CD4-positive, alpha-beta T cell (primary cell): ENCODE measurements at regions of chr18 and their contacts with region 1.

Region 1: GRCh38 chr18:46574000-46574742 is 82.8 kb downstream of the LOXHD1 start:
- DNase-seq: no peak
- ATAC-seq: no peak
- H3K4me3 ChIP-seq: no peak overlapping the region
- H3K4me3 Mint-ChIP-seq: no peak overlapping the region
- H3K27ac ChIP-seq: no peak overlapping the region
- H3K27ac Mint-ChIP-seq: no peak overlapping the region
- H3K4me1 ChIP-seq: no peaks in the 10 kb centered on the region
- H3K4me1 Mint-ChIP-seq: no peaks in the 10 kb centered on the region
- H3K27me3 ChIP-seq: peaks cover 0 to 3% of the 10 kb centered on the region in 2 experiments
- H3K27me3 Mint-ChIP-seq: peaks cover 12% of the 10 kb centered on the region
- CTCF ChIP-seq: no peak

Region 2: DNA sequence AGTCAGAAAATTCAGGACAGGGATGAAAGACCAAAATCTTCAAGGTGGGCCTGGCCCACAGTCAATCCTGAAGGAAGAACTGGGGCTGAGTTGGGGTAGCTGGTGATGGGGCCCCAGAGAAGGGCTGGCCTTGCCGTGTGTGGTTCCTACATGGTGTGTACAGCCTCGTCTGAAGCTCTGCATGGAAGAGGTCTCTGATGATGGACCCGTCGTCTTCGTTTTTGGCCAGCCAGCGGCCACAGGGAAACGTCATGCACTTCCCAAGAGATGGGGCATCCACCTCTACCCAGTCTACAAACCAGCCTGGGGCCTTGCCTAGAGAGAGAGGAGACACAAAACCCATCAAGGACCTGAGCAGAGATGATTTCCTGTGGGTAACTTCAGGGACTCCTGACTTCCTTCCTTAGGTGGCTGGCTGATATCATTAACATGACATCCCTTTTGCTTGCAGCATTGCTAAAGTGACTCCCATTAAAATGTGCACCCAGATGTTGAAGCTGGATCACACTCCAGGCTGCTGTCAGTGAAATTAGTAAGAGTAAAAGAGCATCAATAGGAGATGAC is 32.5 kb before region 1 on chr18:
- CTCF ChIA-PET with region 1: no interaction called
- POLR2A ChIA-PET with region 1: no interaction called
- intact Hi-C with region 1: loop called in 1 of 2 experiments (anchors 2 kb)
- DNase-seq: no peak
- ATAC-seq: no peak
- H3K4me3 ChIP-seq: no peak overlapping the region
- H3K4me3 Mint-ChIP-seq: no peak overlapping the region
- H3K27ac ChIP-seq: no peak overlapping the region
- H3K27ac Mint-ChIP-seq: no peak overlapping the region
- H3K4me1 ChIP-seq: no peaks in the 10 kb centered on the region
- H3K4me1 Mint-ChIP-seq: no peaks in the 10 kb centered on the region
- H3K27me3 ChIP-seq: no peaks in the 10 kb centered on the region
- H3K27me3 Mint-ChIP-seq: peaks cover 17% of the 10 kb centered on the region
- CTCF ChIP-seq: no peak

Region 3: DNA sequence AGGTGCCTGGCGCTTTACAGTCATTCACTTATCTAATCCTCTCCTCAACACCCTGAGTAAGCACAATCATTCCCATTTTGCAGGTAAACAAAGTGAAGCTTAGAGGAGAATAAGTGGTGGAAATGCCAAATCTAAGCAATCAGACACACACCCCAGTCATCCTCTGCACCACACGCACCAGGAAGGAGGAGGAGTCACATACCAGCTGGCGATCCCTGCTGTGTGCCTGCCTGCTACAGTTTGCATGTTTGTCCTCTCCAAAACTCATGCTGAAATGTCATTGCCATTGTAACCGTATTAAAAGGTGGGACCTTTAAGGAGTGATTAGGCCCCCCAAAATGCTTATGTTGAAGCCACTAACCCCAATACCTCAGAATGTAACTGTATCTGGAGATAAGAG is 10.9 kb before region 1 on chr18:
- CTCF ChIA-PET with region 1: no interaction called
- POLR2A ChIA-PET with region 1: no interaction called
- intact Hi-C with region 1: no loop called
- DNase-seq: no peak
- ATAC-seq: no peak
- H3K4me3 ChIP-seq: no peak overlapping the region
- H3K4me3 Mint-ChIP-seq: no peak overlapping the region
- H3K27ac ChIP-seq: no peak overlapping the region
- H3K27ac Mint-ChIP-seq: no peak overlapping the region
- H3K4me1 ChIP-seq: no peaks in the 10 kb centered on the region
- H3K4me1 Mint-ChIP-seq: no peaks in the 10 kb centered on the region
- H3K27me3 ChIP-seq: no peaks in the 10 kb centered on the region
- H3K27me3 Mint-ChIP-seq: peaks cover 6% of the 10 kb centered on the region
- CTCF ChIP-seq: no peak